HCT116 (cell line): ENCODE measurements at regions of chr7 and their contacts with region 1.

Region 1: DNA sequence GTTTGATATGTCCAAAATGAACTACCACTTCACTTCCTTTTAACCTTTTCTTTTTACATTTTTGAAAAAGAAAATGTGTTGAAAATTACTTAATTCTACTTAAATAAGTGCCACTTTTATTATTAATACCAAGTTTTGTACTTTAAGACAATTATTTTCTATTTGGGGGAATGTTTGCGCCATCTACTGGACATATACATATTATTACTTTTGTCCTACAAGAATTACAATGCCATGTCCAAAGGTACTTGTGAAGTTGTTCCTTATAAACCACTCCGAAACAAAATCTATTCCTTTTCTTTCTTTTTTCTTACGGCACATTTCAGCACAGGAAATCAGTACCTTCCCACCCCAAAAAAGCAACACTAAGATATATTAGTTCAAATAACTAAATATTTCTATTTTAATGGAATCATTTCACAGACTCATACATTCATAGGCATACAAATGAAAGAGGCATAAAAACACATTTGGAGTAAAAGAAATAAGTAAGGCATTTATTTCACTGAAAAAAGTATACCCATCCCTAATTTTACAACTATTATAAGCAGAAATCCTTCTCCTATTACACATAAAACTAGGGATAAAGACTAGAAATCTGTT is 169.9 kb downstream of the RNF133 start:
- DNase-seq: peak; percentile 39
- ATAC-seq: no peak
- H3K4me3 ChIP-seq: no peak overlapping the region
- H3K27ac ChIP-seq: no peak overlapping the region
- H3K4me1 ChIP-seq: no peaks in the 10 kb centered on the region
- H3K27me3 ChIP-seq: no peaks in the 10 kb centered on the region
- CTCF ChIP-seq: peak; percentile 28 to 64 (median 60); a peak in 5 of 6 replicates
- POLR2A ChIP-seq: no peak
- RAD21 ChIP-seq: peak; percentile 72

Region 2: DNA sequence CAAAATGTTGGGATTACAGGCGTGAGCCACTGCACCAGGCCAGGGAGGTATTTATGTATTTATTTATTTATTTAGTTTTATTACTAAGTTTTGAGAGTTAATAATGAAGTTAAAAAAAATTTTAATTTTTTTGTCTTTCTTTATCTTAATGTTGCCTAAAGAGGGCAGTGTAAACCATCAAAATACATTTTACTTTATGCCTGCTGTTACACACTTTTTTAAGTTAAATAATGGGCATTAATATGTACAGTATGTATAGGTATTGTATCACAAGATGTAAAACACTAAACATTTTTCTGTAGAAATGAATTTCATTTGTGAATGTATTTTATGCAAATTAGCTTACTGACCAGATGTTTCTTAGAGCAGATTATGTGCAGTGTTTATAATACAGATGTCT is 514.3 kb before region 1 on chr7:
- CTCF ChIA-PET with region 1: interaction called, 3 read pairs
- POLR2A ChIA-PET with region 1: no interaction called
- RAD21 ChIA-PET with region 1: no interaction called
- intact Hi-C with region 1: loop called (anchors 1 kb)
- DNase-seq: no peak
- ATAC-seq: no peak; the same call in 1 of the 2 replicates
- H3K4me3 ChIP-seq: no peak overlapping the region
- H3K27ac ChIP-seq: no peak overlapping the region
- H3K4me1 ChIP-seq: no peaks in the 10 kb centered on the region
- H3K27me3 ChIP-seq: no peaks in the 10 kb centered on the region
- CTCF ChIP-seq: peak in 2 of 3 experiments; percentile 24 to 36; a peak in 3 of 6 replicates
- POLR2A ChIP-seq: no peak
- RAD21 ChIP-seq: peak; percentile 63

Region 3: DNA sequence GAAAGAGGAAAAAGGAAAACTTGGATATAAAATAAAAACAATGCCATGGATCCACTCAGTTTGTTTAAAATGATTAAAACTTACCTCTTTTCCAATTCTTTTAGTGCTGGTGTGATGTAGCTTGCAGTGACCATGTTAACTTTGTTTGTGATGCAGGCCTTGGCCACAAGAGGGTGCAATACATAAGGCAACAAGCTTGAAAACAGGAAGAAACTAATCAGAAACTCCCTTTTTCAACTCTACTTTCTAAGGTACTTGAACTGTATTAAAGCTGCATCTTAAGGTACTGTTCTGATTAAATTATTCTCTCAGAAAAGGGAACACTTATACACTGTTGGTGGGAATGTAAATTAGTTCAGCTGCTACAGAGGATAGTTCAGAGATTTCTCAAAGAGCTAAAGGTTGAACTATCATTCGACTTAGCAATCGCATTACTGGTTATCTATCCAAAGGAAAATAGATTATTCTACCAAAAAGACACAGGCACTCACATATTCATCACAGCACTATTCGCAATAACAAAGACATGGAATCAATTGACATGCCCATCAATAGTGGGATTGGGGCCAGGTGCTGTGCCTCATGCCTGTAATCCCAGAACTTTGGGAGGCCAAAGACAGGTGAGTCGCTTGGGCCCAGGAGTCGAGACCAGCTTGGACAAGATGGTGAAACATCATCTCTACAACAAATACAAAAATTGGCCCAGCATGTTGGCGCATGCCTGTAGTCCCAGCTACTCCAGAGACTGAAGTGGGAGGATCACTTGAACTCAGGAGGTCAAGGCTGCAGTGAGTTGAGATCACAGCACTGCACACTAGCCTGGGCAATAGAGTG is 435.8 kb before region 1 on chr7:
- CTCF ChIA-PET with region 1: interaction called, 13 read pairs
- POLR2A ChIA-PET with region 1: no interaction called
- RAD21 ChIA-PET with region 1: interaction called in 1 of 2 experiments, 4 read pairs
- intact Hi-C with region 1: loop called (anchors 1 kb)
- DNase-seq: peak; percentile 61
- ATAC-seq: peak; percentile 77
- H3K4me3 ChIP-seq: no peak overlapping the region
- H3K27ac ChIP-seq: no peak overlapping the region
- H3K4me1 ChIP-seq: no peaks in the 10 kb centered on the region
- H3K27me3 ChIP-seq: no peaks in the 10 kb centered on the region
- CTCF ChIP-seq: peak; percentile 50 to 91 (median 90)
- POLR2A ChIP-seq: no peak
- RAD21 ChIP-seq: peak; percentile 73

Region 4: GRCh38 chr7:122219253-122219865 is 309.6 kb before region 1 on chr7:
- CTCF ChIA-PET with region 1: interaction called, 23 read pairs
- POLR2A ChIA-PET with region 1: interaction called, 3 read pairs
- RAD21 ChIA-PET with region 1: interaction called in 1 of 2 experiments, 3 read pairs
- intact Hi-C with region 1: loop called (anchors 1 kb)
- DNase-seq: peak; percentile 10
- ATAC-seq: no peak
- H3K4me3 ChIP-seq: no peak overlapping the region
- H3K27ac ChIP-seq: no peak overlapping the region
- H3K4me1 ChIP-seq: no peaks in the 10 kb centered on the region
- H3K27me3 ChIP-seq: no peaks in the 10 kb centered on the region
- CTCF ChIP-seq: peak; percentile 56 to 78 (median 72)
- POLR2A ChIP-seq: no peak
- RAD21 ChIP-seq: peak; percentile 82